ENCODE measurements at regions of chr3 and their contacts with region 1.

Region 1: GRCh38 chr3:196127295-196128040 is 45.6 kb upstream of the TFRC start:
- DNase-seq: peak; percentile 81 to 98 (median 88)
- ATAC-seq: peak; percentile 90
- H3K4me3 ChIP-seq: peak overlapping the region; percentile 14; the same call in 1 of the 2 replicates
- H3K27ac ChIP-seq: peak overlapping the region; percentile 96
- H3K4me1 ChIP-seq: peaks cover 33% of the 10 kb centered on the region in 2 experiments
- H3K27me3 ChIP-seq: no peaks in the 10 kb centered on the region
- CTCF ChIP-seq: peak in 2 of 3 experiments; percentile 15 to 49; a peak in 2 of 6 replicates
- EP300 ChIP-seq: peak; percentile 89
- POLR2A ChIP-seq: peak; percentile 53; the same call in 1 of the 2 replicates
- RAD21 ChIP-seq: peak; percentile 43 to 67; a peak in 3 of 4 replicates

Region 2: GRCh38 chr3:196111939-196112386 is 15.5 kb before region 1 on chr3:
- CTCF ChIA-PET with region 1: no interaction called
- POLR2A ChIA-PET with region 1: interaction called, 18 read pairs
- in situ Hi-C with region 1: no loop called
- intact Hi-C with region 1: no loop called
- DNase-seq: no peak
- ATAC-seq: no peak
- H3K4me3 ChIP-seq: no peak overlapping the region
- H3K27ac ChIP-seq: 0 out of 3 replicates have a peak overlapping the region, but pooled peaks have one; percentile 18
- H3K4me1 ChIP-seq: peaks cover 22 to 42% of the 10 kb centered on the region in 2 experiments; a peak in 4 of 5 replicates
- H3K27me3 ChIP-seq: no peaks in the 10 kb centered on the region
- CTCF ChIP-seq: no peak
- EP300 ChIP-seq: no peak
- POLR2A ChIP-seq: no peak
- RAD21 ChIP-seq: no peak

Region 3: GRCh38 chr3:196179380-196180308 is 52.2 kb after region 1 on chr3:
- CTCF ChIA-PET with region 1: no interaction called
- POLR2A ChIA-PET with region 1: no interaction called
- in situ Hi-C with region 1: no loop called
- intact Hi-C with region 1: loop called (anchors 1 kb)
- DNase-seq: peak; percentile 50 to 74 (median 68)
- ATAC-seq: peak; percentile 61
- H3K4me3 ChIP-seq: no peak overlapping the region
- H3K27ac ChIP-seq: peak overlapping the region; percentile 57
- H3K4me1 ChIP-seq: peaks cover 59 to 73% of the 10 kb centered on the region in 2 experiments
- H3K27me3 ChIP-seq: no peaks in the 10 kb centered on the region
- CTCF ChIP-seq: peak in 2 of 3 experiments; percentile 21 to 33; a peak in 3 of 6 replicates
- EP300 ChIP-seq: no peak
- POLR2A ChIP-seq: no peak
- RAD21 ChIP-seq: no peak; a peak in 1 of 4 replicates

Measured in K562 (cell line).